Dorsolateral prefrontal cortex (tissue), 120 donors: ENCODE measurements at regions of chr1 and their contacts with region 1.

Region 1: GRCh38 chr1:43367904-43368645 is at the start of gene ELOVL1:
- DNase-seq: peak; percentile 73 to 92 (median 84)
- H3K4me3 ChIP-seq: peak within 1 kb of the TSS; percentile 50 to 94 (median 81)
- H3K27ac ChIP-seq: peak within 1 kb of the TSS; percentile 77 to 98 (median 95)
- H3K27me3 ChIP-seq: no peaks in the 10 kb centered on the region
- CTCF ChIP-seq: peak in 38 of 56 donors; percentile 9 to 49 (median 28)
- total RNA-seq, gene ELOVL1: 27.1 to 291 (median 70.1) TPM

Region 2: GRCh38 chr1:43238085-43238484 is 130.0 kb before region 1 on chr1:
- intact Hi-C with region 1: loop called (anchors 5 kb)
- DNase-seq: peak; percentile 57 to 93 (median 76)
- H3K4me3 ChIP-seq: no peak overlapping the region
- H3K27ac ChIP-seq: peak overlapping the region in 56 of 59 donors; percentile 11 to 87 (median 70)
- H3K27me3 ChIP-seq: no peaks in the 10 kb centered on the region
- CTCF ChIP-seq: peak; percentile 52 to 94 (median 81)

Region 3: DNA sequence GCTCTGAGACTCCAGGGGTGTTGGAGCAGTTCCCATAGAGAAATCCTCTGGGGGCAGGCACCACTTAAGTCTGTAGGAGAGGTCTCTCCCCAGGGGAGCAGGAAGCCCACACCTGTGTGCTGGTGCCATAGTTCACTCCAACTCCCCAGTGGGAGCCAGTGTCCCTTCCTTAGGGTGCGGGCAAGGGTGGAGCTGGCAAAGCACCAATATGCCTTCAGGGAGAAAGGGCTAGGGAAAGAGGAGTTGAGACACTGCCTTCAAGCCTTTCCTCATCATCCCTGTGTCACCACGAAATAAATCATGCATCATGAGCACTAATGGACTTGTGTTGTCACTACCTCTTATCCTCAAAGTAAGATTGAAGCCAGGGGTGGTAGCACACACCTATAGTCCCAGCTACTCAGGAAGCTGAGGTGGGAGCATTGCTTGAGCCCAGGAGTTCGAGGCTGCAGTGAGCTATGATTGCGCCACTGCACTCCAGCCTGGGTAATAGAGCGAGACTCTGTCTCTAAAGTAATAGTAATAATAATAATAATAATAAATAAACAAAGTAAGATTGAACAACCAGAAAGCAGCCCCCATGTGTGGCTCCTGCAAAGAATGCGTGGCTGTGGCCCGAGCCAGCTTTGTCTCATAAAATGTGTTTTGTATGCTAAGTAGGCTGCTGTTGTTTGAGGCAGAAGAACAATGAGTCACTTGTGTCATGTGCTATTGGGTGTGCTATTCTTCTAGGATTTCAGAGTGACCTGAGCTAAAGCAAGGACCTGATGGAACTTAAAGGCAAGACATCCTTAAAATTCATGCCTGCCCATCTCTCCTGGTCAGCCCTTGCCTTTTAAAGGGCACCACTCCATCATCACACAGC is 73.9 kb before region 1 on chr1:
- intact Hi-C with region 1: loop called in 1 of 2 experiments (anchors 5 kb)
- DNase-seq: peak in 8 of 10 donors; percentile 56 to 82 (median 68)
- H3K4me3 ChIP-seq: peak overlapping the region in 5 of 59 donors; percentile 4 to 21 (median 9)
- H3K27ac ChIP-seq: peak overlapping the region; percentile 84 to 100 (median 97)
- H3K27me3 ChIP-seq: no peaks in the 10 kb centered on the region
- CTCF ChIP-seq: no peak

Region 4: DNA sequence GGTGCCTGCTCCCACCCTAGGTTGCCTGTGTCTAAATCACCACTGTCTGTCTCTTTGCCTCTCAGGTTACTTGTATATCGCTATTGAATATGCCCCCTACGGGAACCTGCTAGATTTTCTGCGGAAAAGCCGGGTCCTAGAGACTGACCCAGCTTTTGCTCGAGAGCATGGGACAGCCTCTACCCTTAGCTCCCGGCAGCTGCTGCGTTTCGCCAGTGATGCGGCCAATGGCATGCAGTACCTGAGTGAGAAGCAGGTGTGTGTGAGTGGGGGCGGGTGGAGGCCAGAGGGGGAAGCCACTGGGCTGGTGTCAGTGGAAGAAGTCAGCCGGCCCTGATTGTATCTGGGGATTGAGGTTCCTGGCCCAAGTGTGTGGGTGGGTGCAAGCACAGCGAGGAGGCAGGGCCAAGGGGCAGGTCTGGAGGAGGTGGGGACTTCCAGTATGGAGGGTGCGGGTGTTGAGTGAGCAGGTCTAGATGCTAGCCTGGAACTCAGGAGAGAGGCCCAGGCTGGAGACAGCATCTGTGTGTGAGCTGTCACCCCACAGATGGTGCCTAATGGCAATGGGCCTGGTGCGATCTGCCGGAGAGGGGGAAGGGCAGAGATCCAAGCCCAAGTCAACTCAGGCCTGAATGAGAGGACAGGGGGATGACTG is 50.1 kb before region 1 on chr1:
- intact Hi-C with region 1: loop called (anchors 5 kb)
- DNase-seq: peak; percentile 62 to 86 (median 80)
- H3K4me3 ChIP-seq: no peak overlapping the region
- H3K27ac ChIP-seq: peak overlapping the region in 57 of 59 donors; percentile 10 to 96 (median 79)
- H3K27me3 ChIP-seq: no peaks in the 10 kb centered on the region
- CTCF ChIP-seq: peak in 1 of 56 donors; percentile 16

Region 5: GRCh38 chr1:43383449-43383848 is 15.4 kb after region 1 on chr1:
- intact Hi-C with region 1: loop called in 1 of 2 experiments (anchors 1 kb)
- DNase-seq: peak in 5 of 10 donors; percentile 44 to 82 (median 62)
- H3K4me3 ChIP-seq: no peak overlapping the region
- H3K27ac ChIP-seq: peak overlapping the region; percentile 84 to 100 (median 96)
- H3K27me3 ChIP-seq: no peaks in the 10 kb centered on the region
- CTCF ChIP-seq: peak in 55 of 56 donors; percentile 32 to 80 (median 59)